Activated T-helper 2 cell treated with anti-CD3 and anti-CD28 coated beads, Interferon-gamma antibody, Interleukin-2, Interleukin-4, amounts not matched to agents 10 μg/mL and 5 μg/mL and 100 μg/mL, durations not matched to agents 14 hours and 24 hours and 36 hours (primary cell): ENCODE measurements at regions of chr2 and their contacts with region 1.

Region 1: DNA sequence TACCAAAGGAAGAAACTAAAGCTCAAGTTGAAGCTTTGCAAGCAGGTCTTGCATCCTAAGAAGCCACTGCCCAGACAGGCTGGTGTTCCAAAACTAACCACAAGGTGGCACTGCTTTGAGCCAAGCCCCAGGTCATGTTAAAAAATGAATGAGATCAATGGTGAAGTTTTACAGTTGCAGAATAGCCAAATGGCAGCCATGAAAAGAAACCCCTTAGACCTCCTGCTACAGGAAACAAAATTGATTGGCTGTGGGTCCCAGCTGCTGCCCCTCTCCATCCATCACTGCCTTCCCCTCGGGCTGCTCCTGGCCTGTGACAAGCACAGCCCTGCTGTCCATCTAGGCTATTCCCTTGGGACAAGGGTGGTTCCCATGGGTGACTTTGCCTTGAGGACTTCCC is 20.7 kb upstream of the MREG start:
- DNase-seq: peak; percentile 69
- H3K4me3 Mint-ChIP-seq: no peak overlapping the region
- H3K27ac Mint-ChIP-seq: no peak overlapping the region
- H3K4me1 Mint-ChIP-seq: peaks cover 36% of the 10 kb centered on the region
- H3K27me3 Mint-ChIP-seq: no peaks in the 10 kb centered on the region

Region 2: GRCh38 chr2:216044883-216045486 is 10.9 kb after region 1 on chr2:
- intact Hi-C with region 1: no loop called
- DNase-seq: no peak
- H3K4me3 Mint-ChIP-seq: no peak overlapping the region
- H3K27ac Mint-ChIP-seq: no peak overlapping the region
- H3K4me1 Mint-ChIP-seq: peaks cover 2% of the 10 kb centered on the region
- H3K27me3 Mint-ChIP-seq: no peaks in the 10 kb centered on the region

Region 3: DNA sequence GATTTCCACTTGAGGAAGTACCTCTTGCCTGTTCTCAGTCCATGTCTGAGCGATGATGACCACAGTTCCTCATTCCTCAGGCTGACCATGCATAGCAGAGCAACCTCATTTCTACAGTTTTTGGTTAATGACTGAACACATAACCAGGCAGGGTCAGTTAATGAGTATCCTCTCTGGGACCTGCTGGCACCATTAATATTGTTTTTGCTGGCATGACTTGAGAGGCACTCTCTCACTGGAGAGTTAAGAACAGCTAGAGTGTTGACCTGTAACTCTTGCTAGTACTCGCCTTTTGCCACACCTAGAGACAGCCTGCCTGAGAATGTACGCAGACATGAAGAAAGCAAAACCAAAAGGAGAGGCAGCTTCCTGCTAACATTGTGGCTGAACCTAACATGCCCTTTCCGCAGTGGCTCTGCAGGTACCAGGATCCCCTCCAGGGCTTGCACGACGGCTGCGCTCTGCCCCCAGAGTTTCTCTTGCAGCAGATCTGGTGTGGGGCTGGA is 23.7 kb after region 1 on chr2:
- intact Hi-C with region 1: loop called (anchors 1 kb)
- DNase-seq: peak; percentile 52
- H3K4me3 Mint-ChIP-seq: peak overlapping the region; percentile 72
- H3K27ac Mint-ChIP-seq: peak overlapping the region; percentile 88
- H3K4me1 Mint-ChIP-seq: peaks cover 22% of the 10 kb centered on the region
- H3K27me3 Mint-ChIP-seq: no peaks in the 10 kb centered on the region

Region 4: DNA sequence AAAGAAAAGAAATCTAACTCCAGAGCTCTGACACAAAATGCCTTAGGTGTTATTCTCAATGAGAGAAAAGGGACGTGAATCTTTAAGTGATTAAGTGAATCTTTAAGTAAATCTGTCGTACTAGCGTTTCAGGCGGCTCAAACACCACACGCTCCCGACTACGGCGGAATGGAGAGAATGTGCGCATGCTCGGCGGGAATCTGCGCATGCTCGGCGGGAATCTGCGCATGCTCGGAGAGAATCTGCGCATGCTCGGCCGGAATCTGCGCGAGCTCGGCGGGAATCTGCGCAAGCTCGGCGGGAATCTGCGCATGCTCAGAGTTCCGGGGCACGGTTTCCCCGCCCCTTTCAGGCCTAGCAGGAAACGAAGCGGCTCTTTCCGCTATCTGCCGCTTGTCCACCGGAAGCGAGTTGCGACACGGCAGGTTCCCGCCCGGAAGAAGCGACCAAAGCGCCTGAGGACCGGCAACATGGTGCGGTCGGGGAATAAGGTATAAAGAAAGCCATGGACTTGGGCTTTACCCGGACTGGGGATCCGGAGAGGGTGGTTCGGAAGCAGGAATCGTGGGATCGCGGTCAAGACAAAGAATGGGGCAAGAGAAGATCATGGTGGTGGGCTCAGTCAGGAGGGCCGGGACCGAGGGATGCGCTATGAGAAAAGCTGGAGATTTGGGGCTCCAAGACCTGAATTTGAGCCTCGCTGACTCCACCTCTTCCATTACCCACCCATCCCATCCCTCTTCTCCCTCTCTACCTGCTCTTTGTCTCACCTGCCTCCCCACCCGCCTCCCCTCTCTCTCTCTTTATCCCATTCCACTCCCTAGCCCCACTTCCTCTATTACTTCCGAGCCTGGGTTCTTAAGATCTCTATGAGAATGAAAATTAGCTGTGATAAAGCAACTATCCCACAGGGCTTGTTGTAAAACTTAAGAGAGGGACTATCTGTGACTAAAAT is 75.2 kb after region 1 on chr2 and contains the start of gene XRCC5:
- intact Hi-C with region 1: loop called (anchors 2 kb)
- DNase-seq: peak; percentile 95
- H3K4me3 Mint-ChIP-seq: peak within 1 kb of the TSS; percentile 96
- H3K27ac Mint-ChIP-seq: peak within 1 kb of the TSS; percentile 96
- H3K4me1 Mint-ChIP-seq: peaks cover 51% of the 10 kb centered on the region
- H3K27me3 Mint-ChIP-seq: no peaks in the 10 kb centered on the region
- total RNA-seq, gene XRCC5: 452 and 492 TPM in 2 replicates

Region 5: GRCh38 chr2:216412022-216412999 is 378.2 kb after region 1 on chr2 and contains the start of gene SMARCAL1:
- intact Hi-C with region 1: loop called (anchors 5 kb)
- DNase-seq: peak; percentile 97
- H3K4me3 Mint-ChIP-seq: peak within 1 kb of the TSS; percentile 98
- H3K27ac Mint-ChIP-seq: peak within 1 kb of the TSS; percentile 94
- H3K4me1 Mint-ChIP-seq: peaks cover 19% of the 10 kb centered on the region
- H3K27me3 Mint-ChIP-seq: peaks cover 13% of the 10 kb centered on the region
- total RNA-seq, gene SMARCAL1: 32.8 and 34.1 TPM in 2 replicates

Region 6: GRCh38 chr2:216819766-216820165 is 785.7 kb after region 1 on chr2:
- intact Hi-C with region 1: no loop called
- DNase-seq: no peak
- H3K4me3 Mint-ChIP-seq: no peak overlapping the region
- H3K27ac Mint-ChIP-seq: no peak overlapping the region
- H3K4me1 Mint-ChIP-seq: no peaks in the 10 kb centered on the region
- H3K27me3 Mint-ChIP-seq: peaks cover 11% of the 10 kb centered on the region